Aorta (tissue), 5 donors: ENCODE measurements at regions of chr11 and their contacts with region 1.

Region 1: GRCh38 chr11:16605894-16606783 is 132.3 kb upstream of the C11orf58 start:
- DNase-seq: peak; percentile 91 to 95
- ATAC-seq: peak; percentile 91
- H3K4me3 ChIP-seq: peak overlapping the region; percentile 14 to 48
- H3K27ac ChIP-seq: peak overlapping the region in 1 of 2 donors; percentile 58
- H3K4me1 ChIP-seq: no peaks in the 10 kb centered on the region
- H3K27me3 ChIP-seq: no peaks in the 10 kb centered on the region

Region 2: DNA sequence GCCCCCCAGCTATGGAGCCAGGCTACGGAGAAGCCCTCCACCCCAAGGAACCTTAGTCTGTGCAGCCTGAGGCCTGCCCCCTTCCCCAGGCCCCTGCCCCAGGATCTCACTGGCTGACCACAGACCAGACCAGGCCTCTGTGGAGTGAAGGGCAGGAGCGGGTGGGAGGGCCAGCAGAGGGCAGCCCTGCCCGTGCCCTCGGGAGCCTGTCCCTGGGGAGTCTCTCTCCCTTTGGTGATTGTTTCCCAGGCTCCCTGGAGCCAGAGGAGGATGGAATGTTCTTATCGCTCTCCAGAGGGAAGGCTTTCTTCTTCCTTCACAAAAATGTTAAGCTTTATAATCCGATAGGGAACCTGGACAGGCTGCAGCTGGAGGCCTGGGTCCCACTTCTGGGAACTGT is 705.1 kb before region 1 on chr11:
- intact Hi-C with region 1: loop called in 1 of 2 experiments (anchors 10 kb)
- DNase-seq: no peak
- ATAC-seq: no peak
- H3K4me3 ChIP-seq: no peak overlapping the region
- H3K27ac ChIP-seq: no peak overlapping the region
- H3K4me1 ChIP-seq: no peaks in the 10 kb centered on the region
- H3K27me3 ChIP-seq: no peaks in the 10 kb centered on the region